Activated CD4-positive, alpha-beta T cell treated with anti-CD3 and anti-CD28 coated beads, Interleukin-2, amount 10 ng/mL, durations not matched to agents 7 days and 5 days (primary cell): ENCODE measurements at regions of chr6 and their contacts with region 1.

Region 1: GRCh38 chr6:136792410-136793262 is at the start of gene MAP3K5:
- DNase-seq: peak; percentile 94
- H3K4me3 Mint-ChIP-seq: peak within 1 kb of the TSS; percentile 87
- H3K27ac Mint-ChIP-seq: peak within 1 kb of the TSS; percentile 96
- H3K4me1 Mint-ChIP-seq: peaks cover 33% of the 10 kb centered on the region
- H3K27me3 Mint-ChIP-seq: peaks cover 2% of the 10 kb centered on the region
- total RNA-seq, gene MAP3K5: 23.4 to 24.0 TPM

Region 2: GRCh38 chr6:136586295-136586694 is 206.3 kb before region 1 on chr6:
- CTCF ChIA-PET with region 1: interaction called, 12 read pairs
- POLR2A ChIA-PET with region 1: no interaction called
- DNase-seq: no peak
- H3K4me3 Mint-ChIP-seq: no peak overlapping the region
- H3K27ac Mint-ChIP-seq: peak overlapping the region; percentile 46
- H3K4me1 Mint-ChIP-seq: no peaks in the 10 kb centered on the region
- H3K27me3 Mint-ChIP-seq: no peaks in the 10 kb centered on the region

Region 3: GRCh38 chr6:136604928-136605510 is 187.6 kb before region 1 on chr6:
- CTCF ChIA-PET with region 1: interaction called, 15 read pairs
- POLR2A ChIA-PET with region 1: no interaction called
- DNase-seq: no peak
- H3K4me3 Mint-ChIP-seq: no peak overlapping the region
- H3K27ac Mint-ChIP-seq: no peak overlapping the region
- H3K4me1 Mint-ChIP-seq: peaks cover 15% of the 10 kb centered on the region
- H3K27me3 Mint-ChIP-seq: no peaks in the 10 kb centered on the region

Region 4: GRCh38 chr6:136643850-136644596 is 148.6 kb before region 1 on chr6:
- CTCF ChIA-PET with region 1: interaction called, 218 read pairs
- POLR2A ChIA-PET with region 1: interaction called, 24 read pairs
- DNase-seq: peak; percentile 88
- H3K4me3 Mint-ChIP-seq: no peak overlapping the region
- H3K27ac Mint-ChIP-seq: no peak overlapping the region
- H3K4me1 Mint-ChIP-seq: peaks cover 6% of the 10 kb centered on the region
- H3K27me3 Mint-ChIP-seq: no peaks in the 10 kb centered on the region

Region 5: GRCh38 chr6:136719280-136720044 is 73.2 kb before region 1 on chr6:
- CTCF ChIA-PET with region 1: interaction called, 19 read pairs
- POLR2A ChIA-PET with region 1: no interaction called
- DNase-seq: no peak
- H3K4me3 Mint-ChIP-seq: no peak overlapping the region
- H3K27ac Mint-ChIP-seq: peak overlapping the region; percentile 68
- H3K4me1 Mint-ChIP-seq: peaks cover 50% of the 10 kb centered on the region
- H3K27me3 Mint-ChIP-seq: no peaks in the 10 kb centered on the region

Region 6: DNA sequence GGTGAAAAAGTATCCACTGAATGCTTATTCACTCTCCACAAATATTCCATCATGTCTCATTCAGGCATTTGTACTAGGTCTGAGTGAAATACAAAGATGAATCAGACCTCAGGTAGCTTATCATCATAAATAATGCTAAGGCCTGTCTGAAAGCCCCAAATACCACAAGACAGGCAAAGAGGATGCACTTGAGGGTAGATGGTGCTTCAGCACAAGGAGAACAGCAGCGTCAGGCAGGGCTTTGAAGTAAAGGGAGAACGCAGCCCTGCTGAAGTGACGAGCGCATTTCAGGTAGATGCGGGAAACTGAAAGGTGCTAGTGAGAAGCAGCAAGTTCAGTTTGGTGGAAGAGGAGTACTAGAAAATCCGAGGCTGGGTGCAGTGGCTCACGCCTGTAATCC is 39.0 kb before region 1 on chr6:
- CTCF ChIA-PET with region 1: interaction called, 12 read pairs
- POLR2A ChIA-PET with region 1: interaction called, 4 read pairs
- DNase-seq: peak; percentile 85
- H3K4me3 Mint-ChIP-seq: peak overlapping the region; percentile 44
- H3K27ac Mint-ChIP-seq: peak overlapping the region; percentile 89
- H3K4me1 Mint-ChIP-seq: peaks cover 81% of the 10 kb centered on the region
- H3K27me3 Mint-ChIP-seq: no peaks in the 10 kb centered on the region

Region 7: GRCh38 chr6:136771306-136771705 is 21.3 kb before region 1 on chr6:
- CTCF ChIA-PET with region 1: interaction called, 13 read pairs
- POLR2A ChIA-PET with region 1: no interaction called
- DNase-seq: no peak
- H3K4me3 Mint-ChIP-seq: no peak overlapping the region
- H3K27ac Mint-ChIP-seq: no peak overlapping the region
- H3K4me1 Mint-ChIP-seq: peaks cover 58% of the 10 kb centered on the region
- H3K27me3 Mint-ChIP-seq: no peaks in the 10 kb centered on the region

Region 8: GRCh38 chr6:136975089-136975715 is 182.6 kb after region 1 on chr6:
- CTCF ChIA-PET with region 1: no interaction called
- POLR2A ChIA-PET with region 1: no interaction called
- DNase-seq: no peak
- H3K4me3 Mint-ChIP-seq: no peak overlapping the region
- H3K27ac Mint-ChIP-seq: no peak overlapping the region
- H3K4me1 Mint-ChIP-seq: no peaks in the 10 kb centered on the region
- H3K27me3 Mint-ChIP-seq: peaks cover 17% of the 10 kb centered on the region

Region 9: DNA sequence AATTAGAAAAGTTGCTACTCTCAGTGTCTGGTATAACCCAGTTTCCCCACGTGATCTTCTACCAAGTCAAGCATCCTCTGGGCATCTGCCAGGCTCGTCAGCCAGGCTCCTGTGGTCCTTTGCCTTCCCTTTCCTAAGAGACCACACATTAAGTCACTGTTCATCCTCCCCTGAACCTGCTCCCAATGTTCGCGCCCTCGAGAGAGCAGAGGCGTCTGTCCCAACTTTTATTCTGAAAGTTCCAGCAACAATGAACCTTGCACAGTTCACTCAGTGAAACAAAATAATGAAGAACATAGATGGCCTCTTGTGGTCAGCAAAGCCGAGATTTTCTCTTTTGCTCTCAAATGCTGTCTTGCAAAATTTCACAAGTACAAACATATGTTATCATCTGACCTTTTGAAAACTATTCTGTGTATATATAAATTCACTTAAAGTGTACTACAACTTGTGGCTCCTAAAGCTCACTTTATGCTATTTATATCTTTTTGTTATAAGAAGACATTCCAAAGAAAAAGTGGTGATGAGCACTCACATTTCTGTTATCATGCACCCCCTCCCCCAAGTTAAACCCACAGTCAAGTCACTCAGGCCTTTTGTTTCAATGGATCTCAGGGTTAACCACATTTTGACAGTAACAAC is 1745.9 kb after region 1 on chr6:
- CTCF ChIA-PET with region 1: no interaction called
- POLR2A ChIA-PET with region 1: no interaction called
- DNase-seq: no peak
- H3K4me3 Mint-ChIP-seq: no peak overlapping the region
- H3K27ac Mint-ChIP-seq: no peak overlapping the region
- H3K4me1 Mint-ChIP-seq: no peaks in the 10 kb centered on the region
- H3K27me3 Mint-ChIP-seq: peaks cover 19% of the 10 kb centered on the region